PC-9 (cell line): ENCODE measurements at regions of chr18 and their contacts with region 1.

Region 1: DNA sequence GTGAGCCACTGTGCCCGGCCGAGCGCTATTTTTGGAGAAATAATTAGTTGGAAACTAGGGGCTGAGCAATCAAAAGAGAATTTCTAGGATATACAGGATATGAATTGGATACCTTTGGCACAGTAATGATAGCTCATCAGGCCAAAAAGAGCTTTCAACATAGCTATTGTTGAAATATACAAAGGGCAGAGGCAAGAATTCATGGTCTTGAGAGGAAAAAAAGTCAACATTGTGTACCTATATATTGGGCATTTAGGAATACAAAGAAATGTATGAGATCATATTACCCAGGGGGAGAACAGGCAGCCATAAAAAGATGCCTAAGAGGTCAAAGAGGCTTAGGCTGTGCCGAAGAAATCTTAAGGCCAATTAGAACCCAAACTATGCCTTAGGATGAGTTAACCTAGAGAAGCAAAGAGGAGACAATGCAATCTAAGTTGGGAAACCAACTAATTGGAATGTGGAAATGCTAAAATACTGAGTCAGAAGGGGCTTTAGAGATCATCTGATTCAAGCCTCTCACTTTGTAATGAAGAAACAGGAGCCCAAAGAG is 99.0 kb downstream of the RBBP8 start:
- DNase-seq: peak in 1 of 2 experiments; percentile 79
- H3K4me3 ChIP-seq: peak overlapping the region; percentile 48
- H3K27ac ChIP-seq: peak overlapping the region; percentile 89
- H3K4me1 ChIP-seq: peaks cover 35% of the 10 kb centered on the region
- H3K27me3 ChIP-seq: no peaks in the 10 kb centered on the region
- CTCF ChIP-seq: no peak

Region 2: GRCh38 chr18:22921772-22922171 is 110.3 kb before region 1 on chr18:
- CTCF ChIA-PET with region 1: no interaction called
- POLR2A ChIA-PET with region 1: no interaction called
- intact Hi-C with region 1: no loop called
- DNase-seq: no peak
- H3K4me3 ChIP-seq: no peak overlapping the region
- H3K27ac ChIP-seq: peak overlapping the region; percentile 65
- H3K4me1 ChIP-seq: peaks cover 22% of the 10 kb centered on the region
- H3K27me3 ChIP-seq: no peaks in the 10 kb centered on the region
- CTCF ChIP-seq: no peak

Region 3: GRCh38 chr18:23106580-23106979 is 74.5 kb after region 1 on chr18:
- CTCF ChIA-PET with region 1: interaction called, 3 read pairs
- POLR2A ChIA-PET with region 1: no interaction called
- intact Hi-C with region 1: loop called (anchors 5 kb)
- DNase-seq: peak; percentile 79 to 91
- H3K4me3 ChIP-seq: no peak overlapping the region; the same call in 1 of the 2 replicates
- H3K27ac ChIP-seq: peak overlapping the region; percentile 91
- H3K4me1 ChIP-seq: peaks cover 66% of the 10 kb centered on the region
- H3K27me3 ChIP-seq: no peaks in the 10 kb centered on the region
- CTCF ChIP-seq: no peak

Region 4: GRCh38 chr18:23401400-23402347 is 369.6 kb after region 1 on chr18:
- CTCF ChIA-PET with region 1: no interaction called
- POLR2A ChIA-PET with region 1: no interaction called
- intact Hi-C with region 1: loop called (anchors 5 kb)
- DNase-seq: peak; percentile 63 to 83
- H3K4me3 ChIP-seq: no peak overlapping the region
- H3K27ac ChIP-seq: peak overlapping the region; percentile 55
- H3K4me1 ChIP-seq: peaks cover 49% of the 10 kb centered on the region
- H3K27me3 ChIP-seq: no peaks in the 10 kb centered on the region
- CTCF ChIP-seq: no peak

Region 5: GRCh38 chr18:23503038-23503962 is 471.2 kb after region 1 on chr18 and contains the start of gene RMC1:
- CTCF ChIA-PET with region 1: no interaction called
- POLR2A ChIA-PET with region 1: no interaction called
- intact Hi-C with region 1: loop called (anchors 5 kb)
- DNase-seq: peak; percentile 73 to 93
- H3K4me3 ChIP-seq: peak within 1 kb of the TSS; percentile 77
- H3K27ac ChIP-seq: peak within 1 kb of the TSS; percentile 64
- H3K4me1 ChIP-seq: peaks cover 13% of the 10 kb centered on the region
- H3K27me3 ChIP-seq: no peaks in the 10 kb centered on the region
- CTCF ChIP-seq: no peak
- total RNA-seq, gene RMC1: 14.5 and 19.6 TPM in 2 replicates